ENCODE measurements at regions of chr3 and their contacts with region 1.

Region 1: GRCh38 chr3:160413613-160414248 is 14.3 kb downstream of the SMC4 start:
- DNase-seq: peak; percentile 32 to 85 (median 54)
- ATAC-seq: peak; percentile 93
- H3K4me3 ChIP-seq: no peak overlapping the region
- H3K4me3 Mint-ChIP-seq: no peak overlapping the region
- H3K27ac ChIP-seq: no peak overlapping the region
- H3K27ac Mint-ChIP-seq: no peak overlapping the region
- H3K4me1 ChIP-seq: no peaks in the 10 kb centered on the region
- H3K4me1 Mint-ChIP-seq: peaks cover 21% of the 10 kb centered on the region
- H3K27me3 ChIP-seq: no peaks in the 10 kb centered on the region
- H3K27me3 Mint-ChIP-seq: no peaks in the 10 kb centered on the region
- CTCF ChIP-seq: peak; percentile 91

Region 2: DNA sequence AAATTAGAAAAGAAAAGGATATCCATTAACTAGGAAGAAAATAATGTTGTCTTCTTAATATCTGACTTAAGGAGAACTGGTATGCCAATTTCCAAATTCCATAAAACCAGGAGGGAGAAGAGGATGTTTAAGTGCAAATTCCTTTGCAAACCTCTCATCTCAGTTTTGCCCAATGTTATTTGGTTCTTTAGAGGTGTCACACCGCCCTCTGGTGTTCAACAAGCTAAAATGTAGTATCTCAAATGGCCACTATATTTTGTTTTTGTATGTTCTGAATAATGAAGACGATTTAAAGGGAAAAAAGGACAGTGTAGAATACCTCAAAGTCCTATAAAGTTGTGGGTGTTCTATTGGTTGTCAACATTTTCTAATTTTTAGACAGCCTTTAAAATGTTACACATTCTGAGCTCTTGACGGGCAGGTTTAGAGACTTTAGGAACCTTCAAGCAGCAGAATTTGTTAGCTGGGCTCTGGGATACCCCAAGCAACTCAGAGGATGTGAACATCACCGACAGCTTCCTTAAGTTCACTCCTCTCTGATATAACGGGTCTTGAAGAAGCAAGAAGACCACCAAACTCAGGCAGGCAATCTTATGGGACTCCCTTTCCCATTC is 1153.6 kb before region 1 on chr3:
- CTCF ChIA-PET with region 1: no interaction called
- POLR2A ChIA-PET with region 1: no interaction called
- intact Hi-C with region 1: loop called in 1 of 2 experiments (anchors 10 kb)
- DNase-seq: peak in 8 of 14 experiments; percentile 2 to 57 (median 22)
- ATAC-seq: no peak
- H3K4me3 ChIP-seq: no peak overlapping the region
- H3K4me3 Mint-ChIP-seq: no peak overlapping the region
- H3K27ac ChIP-seq: no peak overlapping the region
- H3K27ac Mint-ChIP-seq: no peak overlapping the region
- H3K4me1 ChIP-seq: no peaks in the 10 kb centered on the region
- H3K4me1 Mint-ChIP-seq: no peaks in the 10 kb centered on the region
- H3K27me3 ChIP-seq: no peaks in the 10 kb centered on the region
- H3K27me3 Mint-ChIP-seq: peaks cover 20% of the 10 kb centered on the region
- CTCF ChIP-seq: peak; percentile 74

Region 3: DNA sequence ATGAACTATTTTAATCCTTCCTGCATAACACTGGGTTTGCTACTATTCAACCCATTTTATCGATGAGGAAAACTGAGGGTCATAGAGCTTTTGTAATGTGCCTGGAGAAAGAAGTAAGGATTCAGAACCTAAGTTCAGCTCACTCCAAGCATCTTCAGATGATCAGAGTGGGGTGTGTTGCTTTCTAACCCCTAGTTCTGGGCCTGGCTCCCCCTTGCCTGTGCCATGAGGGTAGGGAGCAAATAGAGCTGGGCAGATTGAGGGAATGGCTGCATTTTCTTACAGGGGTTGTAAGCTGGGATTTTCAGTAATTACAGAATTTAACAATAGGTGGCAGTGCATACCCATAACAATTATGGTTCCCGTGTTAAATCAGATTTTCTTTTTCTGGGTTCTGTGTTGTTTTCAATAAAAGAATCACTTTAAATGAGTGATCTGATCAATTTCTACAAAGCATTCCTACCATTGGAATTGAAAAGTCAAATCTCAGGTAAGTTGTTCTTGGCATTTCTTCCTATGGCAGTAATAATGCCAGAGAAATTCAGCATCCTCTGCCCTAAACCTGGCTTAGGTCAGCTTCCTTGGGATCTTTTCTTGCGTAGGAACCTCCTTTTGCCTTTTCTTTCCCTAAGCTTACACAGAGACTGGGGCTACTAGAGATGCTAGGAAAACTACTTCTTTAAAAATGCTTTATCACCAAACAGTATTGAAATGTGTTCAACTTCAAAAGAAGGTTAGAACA is 528.9 kb before region 1 on chr3:
- CTCF ChIA-PET with region 1: no interaction called
- POLR2A ChIA-PET with region 1: no interaction called
- intact Hi-C with region 1: loop called (anchors 1 to 5 kb)
- DNase-seq: peak in 3 of 14 experiments; percentile 17 to 42 (median 35)
- ATAC-seq: peak; percentile 37
- H3K4me3 ChIP-seq: no peak overlapping the region
- H3K4me3 Mint-ChIP-seq: no peak overlapping the region
- H3K27ac ChIP-seq: no peak overlapping the region
- H3K27ac Mint-ChIP-seq: no peak overlapping the region
- H3K4me1 ChIP-seq: no peaks in the 10 kb centered on the region
- H3K4me1 Mint-ChIP-seq: no peaks in the 10 kb centered on the region
- H3K27me3 ChIP-seq: no peaks in the 10 kb centered on the region
- H3K27me3 Mint-ChIP-seq: peaks cover 5% of the 10 kb centered on the region
- CTCF ChIP-seq: peak; percentile 28

Region 4: DNA sequence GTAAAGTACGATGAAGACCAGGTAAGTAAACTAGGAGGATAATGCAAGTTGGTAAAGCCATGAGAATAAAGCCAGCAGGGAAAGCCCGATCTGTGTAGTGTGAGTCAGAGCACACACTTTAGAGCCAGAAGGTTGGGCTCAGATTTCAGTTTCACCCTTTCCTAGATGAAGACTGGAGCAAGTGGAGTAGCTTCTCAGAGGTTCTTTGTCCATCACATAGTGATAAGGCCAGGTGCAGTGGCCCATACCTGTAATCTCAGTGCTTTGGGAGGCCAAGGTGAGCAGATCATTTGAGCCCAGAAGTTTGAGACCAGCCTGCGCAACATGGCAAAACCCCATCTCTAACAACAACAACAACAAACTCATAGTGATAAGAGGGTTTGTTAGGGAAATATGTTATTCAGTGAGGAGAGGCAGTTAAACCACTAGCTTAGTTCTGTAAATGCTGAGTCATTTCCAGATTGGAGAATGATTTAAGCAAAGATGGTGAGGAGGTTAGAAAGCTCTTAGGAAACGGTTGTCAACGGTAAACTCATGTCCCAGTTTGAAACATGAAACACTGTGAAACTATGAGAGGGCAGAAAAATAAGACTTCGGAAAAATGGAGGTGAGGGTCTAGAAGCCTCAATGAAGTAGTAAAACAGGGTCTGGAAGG is 386.1 kb before region 1 on chr3:
- CTCF ChIA-PET with region 1: no interaction called
- POLR2A ChIA-PET with region 1: no interaction called
- intact Hi-C with region 1: loop called (anchors 1 to 2 kb)
- DNase-seq: peak in 1 of 14 experiments; percentile 15
- ATAC-seq: no peak
- H3K4me3 ChIP-seq: no peak overlapping the region
- H3K4me3 Mint-ChIP-seq: no peak overlapping the region
- H3K27ac ChIP-seq: no peak overlapping the region
- H3K27ac Mint-ChIP-seq: no peak overlapping the region
- H3K4me1 ChIP-seq: peaks cover 2% of the 10 kb centered on the region
- H3K4me1 Mint-ChIP-seq: no peaks in the 10 kb centered on the region
- H3K27me3 ChIP-seq: no peaks in the 10 kb centered on the region
- H3K27me3 Mint-ChIP-seq: no peaks in the 10 kb centered on the region
- CTCF ChIP-seq: no peak

Region 5: DNA sequence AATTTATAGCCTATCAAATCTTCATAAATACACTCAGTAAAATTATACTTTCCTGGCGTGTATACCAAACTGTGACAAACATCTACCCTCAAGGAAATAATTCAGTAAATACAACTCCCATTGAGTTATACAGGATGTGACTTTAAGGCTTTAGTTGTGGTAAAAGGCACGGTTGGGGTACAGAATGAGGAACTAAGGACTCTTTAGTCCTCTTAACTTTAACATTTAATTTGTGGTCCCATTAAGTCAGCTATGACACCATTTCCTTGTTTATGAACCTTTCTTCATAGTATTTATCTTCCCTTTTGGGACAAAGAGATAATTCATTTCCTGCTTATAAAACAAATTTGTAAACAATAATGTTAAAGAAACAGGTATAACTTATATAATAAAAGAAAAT is 44.9 kb before region 1 on chr3:
- CTCF ChIA-PET with region 1: no interaction called
- POLR2A ChIA-PET with region 1: no interaction called
- intact Hi-C with region 1: loop called in 1 of 2 experiments (anchors 10 kb)
- DNase-seq: peak in 4 of 14 experiments; percentile 4 to 48 (median 28)
- ATAC-seq: peak; percentile 63
- H3K4me3 ChIP-seq: no peak overlapping the region
- H3K4me3 Mint-ChIP-seq: no peak overlapping the region
- H3K27ac ChIP-seq: no peak overlapping the region
- H3K27ac Mint-ChIP-seq: no peak overlapping the region
- H3K4me1 ChIP-seq: no peaks in the 10 kb centered on the region
- H3K4me1 Mint-ChIP-seq: peaks cover 38% of the 10 kb centered on the region
- H3K27me3 ChIP-seq: no peaks in the 10 kb centered on the region
- H3K27me3 Mint-ChIP-seq: no peaks in the 10 kb centered on the region
- CTCF ChIP-seq: no peak

Region 6: GRCh38 chr3:160449636-160450598 is 36.2 kb after region 1 on chr3 and contains the start of gene TRIM59:
- CTCF ChIA-PET with region 1: no interaction called
- POLR2A ChIA-PET with region 1: interaction called, 11 read pairs
- intact Hi-C with region 1: no loop called
- DNase-seq: peak; percentile 91 to 99 (median 96)
- ATAC-seq: peak; percentile 97
- H3K4me3 ChIP-seq: peak within 1 kb of the TSS; percentile 81
- H3K4me3 Mint-ChIP-seq: peak within 1 kb of the TSS; percentile 95
- H3K27ac ChIP-seq: peak within 1 kb of the TSS; percentile 74 to 84
- H3K27ac Mint-ChIP-seq: peak within 1 kb of the TSS; percentile 95
- H3K4me1 ChIP-seq: peaks cover 22% of the 10 kb centered on the region
- H3K4me1 Mint-ChIP-seq: peaks cover 38% of the 10 kb centered on the region
- H3K27me3 ChIP-seq: no peaks in the 10 kb centered on the region
- H3K27me3 Mint-ChIP-seq: no peaks in the 10 kb centered on the region
- CTCF ChIP-seq: no peak
- total RNA-seq, gene TRIM59: 16.2 to 16.4 TPM

Region 7: DNA sequence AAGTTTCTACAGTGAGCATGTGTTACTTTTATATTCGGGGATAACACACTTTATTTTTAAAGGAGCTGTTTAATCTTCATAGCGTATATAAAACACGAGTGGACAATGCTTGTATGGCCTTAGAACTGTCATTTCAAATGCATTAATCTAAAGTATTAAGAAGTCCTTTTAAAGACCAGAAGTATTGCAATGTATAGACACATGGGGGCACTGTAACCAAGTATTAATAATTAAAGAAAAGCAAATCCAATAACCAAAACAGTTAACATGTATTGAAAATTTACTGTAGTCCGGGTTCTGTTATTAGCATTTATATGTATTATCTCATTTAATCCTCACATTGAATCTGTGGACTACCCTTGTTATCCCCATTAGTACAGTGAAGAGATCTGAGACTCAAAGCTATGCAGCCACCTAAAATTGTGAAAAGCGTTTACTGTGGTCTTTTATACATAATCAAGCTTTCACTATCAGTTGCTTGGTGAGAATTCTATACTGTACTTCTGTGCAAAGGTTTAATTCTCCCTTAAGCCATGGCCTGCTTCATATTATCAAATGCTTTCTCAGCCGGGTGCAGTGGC is 273.3 kb after region 1 on chr3:
- CTCF ChIA-PET with region 1: no interaction called
- POLR2A ChIA-PET with region 1: no interaction called
- intact Hi-C with region 1: no loop called
- DNase-seq: peak in 2 of 14 experiments; percentile 27 to 35
- ATAC-seq: no peak
- H3K4me3 ChIP-seq: no peak overlapping the region
- H3K4me3 Mint-ChIP-seq: no peak overlapping the region
- H3K27ac ChIP-seq: no peak overlapping the region
- H3K27ac Mint-ChIP-seq: no peak overlapping the region
- H3K4me1 ChIP-seq: no peaks in the 10 kb centered on the region
- H3K4me1 Mint-ChIP-seq: no peaks in the 10 kb centered on the region
- H3K27me3 ChIP-seq: no peaks in the 10 kb centered on the region
- H3K27me3 Mint-ChIP-seq: peaks cover 5% of the 10 kb centered on the region
- CTCF ChIP-seq: peak; percentile 30

Measured in CD4-positive, alpha-beta T cell (primary cell).